Endothelial cell of umbilical vein (primary cell): ENCODE measurements at regions of chr15 and their contacts with region 1.

Region 1: DNA sequence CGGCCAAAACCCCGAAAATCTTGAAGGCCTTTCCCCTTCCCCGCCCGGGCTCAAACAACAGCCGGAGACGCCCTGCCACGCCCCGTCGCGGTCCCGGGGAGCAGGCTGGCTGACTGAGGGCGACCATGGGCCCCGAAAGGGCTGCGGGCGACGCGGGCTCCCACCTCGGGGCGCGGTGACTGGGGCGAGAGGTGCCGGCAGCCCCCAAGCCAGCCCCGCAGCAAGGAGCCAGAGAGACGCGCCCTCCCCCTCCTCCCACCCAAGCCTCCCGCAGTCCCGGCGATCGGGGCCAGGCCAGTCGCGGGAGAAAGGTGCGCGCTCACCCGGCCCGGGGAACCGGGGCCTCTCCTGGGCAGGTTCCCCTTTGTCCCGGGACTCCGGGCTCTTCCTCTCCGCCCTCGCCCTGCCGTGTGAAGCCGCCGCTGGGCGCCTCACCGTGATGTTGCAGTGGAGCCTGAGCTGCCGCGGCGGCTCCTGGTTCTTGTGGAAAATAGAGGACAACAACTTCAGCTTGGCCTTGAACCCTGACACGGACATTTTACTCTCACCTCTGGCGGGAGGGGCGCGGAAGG is 30.6 kb upstream of the ZSCAN2 start:
- DNase-seq: no peak
- H3K4me3 ChIP-seq: peak overlapping the region; percentile 67 to 91 (median 87)
- H3K27ac ChIP-seq: peak overlapping the region; percentile 72
- H3K4me1 ChIP-seq: no peaks in the 10 kb centered on the region
- H3K27me3 ChIP-seq: no peaks in the 10 kb centered on the region
- CTCF ChIP-seq: no peak
- POLR2A ChIP-seq: peak; percentile 5

Region 2: DNA sequence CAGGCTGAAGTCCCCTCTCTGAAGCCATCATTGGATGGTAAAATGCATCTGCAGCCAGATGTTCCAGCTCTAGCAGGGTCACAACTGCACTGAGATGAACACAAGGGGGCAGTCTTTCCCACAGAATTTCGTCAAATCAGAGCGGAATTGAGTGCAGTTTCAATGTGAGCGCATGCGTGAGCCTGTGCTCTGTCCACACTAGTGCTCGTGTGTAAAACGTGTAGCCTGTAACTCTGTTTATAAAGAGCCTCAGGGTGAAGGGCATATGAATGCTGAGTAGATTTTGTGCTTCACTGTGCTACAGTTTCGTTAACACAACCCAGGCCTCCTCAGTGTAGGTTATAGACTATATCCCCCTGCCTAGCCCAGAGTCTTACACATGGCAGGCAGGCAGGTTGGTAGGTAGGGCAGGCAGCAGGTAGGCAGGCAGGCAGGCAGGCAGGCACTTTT is 427.3 kb before region 1 on chr15:
- CTCF ChIA-PET with region 1: interaction called, 3 read pairs
- POLR2A ChIA-PET with region 1: no interaction called
- dilution Hi-C with region 1: no loop called
- intact Hi-C with region 1: loop called (anchors 5 kb)
- DNase-seq: peak; percentile 79
- H3K4me3 ChIP-seq: no peak overlapping the region
- H3K27ac ChIP-seq: no peak overlapping the region
- H3K4me1 ChIP-seq: no peaks in the 10 kb centered on the region
- H3K27me3 ChIP-seq: no peaks in the 10 kb centered on the region
- CTCF ChIP-seq: peak; percentile 74 to 75
- POLR2A ChIP-seq: no peak

Region 3: GRCh38 chr15:84582583-84583157 is 12.4 kb after region 1 on chr15:
- CTCF ChIA-PET with region 1: interaction called, 11 read pairs
- POLR2A ChIA-PET with region 1: interaction called, 7 read pairs
- dilution Hi-C with region 1: no loop called
- intact Hi-C with region 1: no loop called
- DNase-seq: no peak
- H3K4me3 ChIP-seq: no peak overlapping the region
- H3K27ac ChIP-seq: no peak overlapping the region
- H3K4me1 ChIP-seq: peaks cover 11% of the 10 kb centered on the region
- H3K27me3 ChIP-seq: no peaks in the 10 kb centered on the region
- CTCF ChIP-seq: no peak
- POLR2A ChIP-seq: no peak

Region 4: GRCh38 chr15:84755736-84756527 is 185.7 kb after region 1 on chr15:
- CTCF ChIA-PET with region 1: no interaction called
- POLR2A ChIA-PET with region 1: no interaction called
- dilution Hi-C with region 1: no loop called
- intact Hi-C with region 1: no loop called
- DNase-seq: no peak
- H3K4me3 ChIP-seq: no peak overlapping the region
- H3K27ac ChIP-seq: no peak overlapping the region
- H3K4me1 ChIP-seq: peaks cover 8% of the 10 kb centered on the region
- H3K27me3 ChIP-seq: no peaks in the 10 kb centered on the region
- CTCF ChIP-seq: no peak
- POLR2A ChIP-seq: no peak